ENCODE measurements at regions of chr9 and their contacts with region 1.

Region 1: DNA sequence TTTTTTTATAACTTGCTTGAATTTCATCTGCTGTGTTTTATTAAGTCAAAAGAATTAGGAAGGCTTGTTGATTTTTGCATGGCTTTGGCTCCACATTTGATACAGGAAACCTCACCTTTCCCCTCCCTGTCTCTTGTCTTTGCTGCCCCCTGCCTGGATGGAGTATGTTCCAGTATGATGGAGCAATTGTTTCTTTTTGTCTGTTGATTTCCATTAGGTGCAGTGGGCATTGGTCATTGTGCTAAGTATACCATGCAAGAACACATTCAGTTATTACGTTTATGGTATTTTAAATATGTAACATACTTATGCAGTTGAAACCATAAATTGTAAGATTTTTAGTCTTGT is 19.6 kb downstream of the TJP2 start:
- DNase-seq: peak; percentile 45
- H3K4me3 ChIP-seq: peak overlapping the region in 1 of 2 experiments; percentile 26; a peak in 1 of 4 replicates
- H3K27ac ChIP-seq: no peak overlapping the region
- H3K4me1 ChIP-seq: no peaks in the 10 kb centered on the region; a peak in 1 of 4 replicates
- H3K27me3 ChIP-seq: no peaks in the 10 kb centered on the region
- CTCF ChIP-seq: no peak
- EP300 ChIP-seq: no peak
- RAD21 ChIP-seq: peak; percentile 70

Region 2: GRCh38 chr9:68933434-68934328 is 260.0 kb before region 1 on chr9:
- CTCF ChIA-PET with region 1: no interaction called
- POLR2A ChIA-PET with region 1: no interaction called
- DNase-seq: no peak
- H3K4me3 ChIP-seq: no peak overlapping the region
- H3K27ac ChIP-seq: no peak overlapping the region
- H3K4me1 ChIP-seq: no peaks in the 10 kb centered on the region
- H3K27me3 ChIP-seq: peaks cover 5% of the 10 kb centered on the region; the same call in 1 of the 2 replicates
- CTCF ChIP-seq: no peak
- EP300 ChIP-seq: no peak
- RAD21 ChIP-seq: no peak

Region 3: GRCh38 chr9:69044240-69045219 is 149.1 kb before region 1 on chr9:
- CTCF ChIA-PET with region 1: interaction called, 241 read pairs
- POLR2A ChIA-PET with region 1: no interaction called
- DNase-seq: peak; percentile 50
- H3K4me3 ChIP-seq: no peak overlapping the region
- H3K27ac ChIP-seq: peak overlapping the region in 1 of 2 experiments; percentile 24; a peak in 2 of 4 replicates
- H3K4me1 ChIP-seq: peaks cover 7 to 9% of the 10 kb centered on the region in 2 experiments; a peak in 2 of 4 replicates
- H3K27me3 ChIP-seq: no peaks in the 10 kb centered on the region
- CTCF ChIP-seq: no peak
- EP300 ChIP-seq: no peak
- RAD21 ChIP-seq: no peak

Region 4: GRCh38 chr9:69066955-69067354 is 126.7 kb before region 1 on chr9:
- CTCF ChIA-PET with region 1: interaction called, 241 read pairs
- POLR2A ChIA-PET with region 1: no interaction called
- DNase-seq: no peak
- H3K4me3 ChIP-seq: no peak overlapping the region
- H3K27ac ChIP-seq: no peak overlapping the region
- H3K4me1 ChIP-seq: no peaks in the 10 kb centered on the region
- H3K27me3 ChIP-seq: no peaks in the 10 kb centered on the region
- CTCF ChIP-seq: no peak
- EP300 ChIP-seq: no peak
- RAD21 ChIP-seq: no peak

Region 5: DNA sequence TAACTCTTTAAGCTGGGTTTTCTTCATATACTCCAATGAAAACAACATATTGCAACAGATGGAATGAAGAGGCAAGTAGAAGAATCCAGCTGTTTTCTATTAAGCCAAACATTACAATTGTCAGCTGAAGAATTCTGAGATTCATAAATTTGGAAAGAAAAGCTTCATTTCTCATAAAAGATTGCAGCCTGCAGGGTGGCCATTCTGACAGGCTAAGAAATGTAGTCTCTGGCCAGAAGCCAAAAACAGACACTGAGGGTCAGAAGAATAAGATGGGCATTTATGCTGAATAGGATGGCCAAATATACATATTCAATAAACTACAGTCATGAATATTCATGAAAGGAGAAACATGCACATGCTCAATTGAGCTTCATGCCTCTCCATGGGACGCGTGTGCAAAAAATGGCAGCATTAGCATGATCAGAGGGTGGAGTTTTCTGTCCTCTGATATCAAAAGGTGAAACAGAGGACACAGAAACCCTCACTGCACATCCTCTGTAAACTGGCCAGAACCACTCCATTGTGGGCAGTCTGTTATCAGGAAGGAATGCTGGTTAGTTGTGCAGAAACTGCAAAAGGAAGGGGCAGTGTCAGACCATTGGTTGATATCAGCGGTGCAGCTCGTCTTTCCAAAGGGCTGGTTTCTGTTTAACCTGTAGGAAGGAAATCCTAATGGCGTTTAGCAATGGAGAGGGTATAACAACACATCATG is 107.9 kb before region 1 on chr9:
- CTCF ChIA-PET with region 1: interaction called, 15 read pairs
- POLR2A ChIA-PET with region 1: no interaction called
- DNase-seq: no peak
- H3K4me3 ChIP-seq: no peak overlapping the region
- H3K27ac ChIP-seq: no peak overlapping the region
- H3K4me1 ChIP-seq: peaks cover 0 to 3% of the 10 kb centered on the region in 2 experiments; a peak in 1 of 4 replicates
- H3K27me3 ChIP-seq: no peaks in the 10 kb centered on the region
- CTCF ChIP-seq: no peak
- EP300 ChIP-seq: no peak
- RAD21 ChIP-seq: no peak

Region 6: GRCh38 chr9:69093471-69094103 is 100.1 kb before region 1 on chr9:
- CTCF ChIA-PET with region 1: interaction called, 10 read pairs
- POLR2A ChIA-PET with region 1: no interaction called
- DNase-seq: no peak
- H3K4me3 ChIP-seq: no peak overlapping the region
- H3K27ac ChIP-seq: no peak overlapping the region
- H3K4me1 ChIP-seq: no peaks in the 10 kb centered on the region
- H3K27me3 ChIP-seq: no peaks in the 10 kb centered on the region
- CTCF ChIP-seq: no peak
- EP300 ChIP-seq: no peak
- RAD21 ChIP-seq: no peak

Region 7: DNA sequence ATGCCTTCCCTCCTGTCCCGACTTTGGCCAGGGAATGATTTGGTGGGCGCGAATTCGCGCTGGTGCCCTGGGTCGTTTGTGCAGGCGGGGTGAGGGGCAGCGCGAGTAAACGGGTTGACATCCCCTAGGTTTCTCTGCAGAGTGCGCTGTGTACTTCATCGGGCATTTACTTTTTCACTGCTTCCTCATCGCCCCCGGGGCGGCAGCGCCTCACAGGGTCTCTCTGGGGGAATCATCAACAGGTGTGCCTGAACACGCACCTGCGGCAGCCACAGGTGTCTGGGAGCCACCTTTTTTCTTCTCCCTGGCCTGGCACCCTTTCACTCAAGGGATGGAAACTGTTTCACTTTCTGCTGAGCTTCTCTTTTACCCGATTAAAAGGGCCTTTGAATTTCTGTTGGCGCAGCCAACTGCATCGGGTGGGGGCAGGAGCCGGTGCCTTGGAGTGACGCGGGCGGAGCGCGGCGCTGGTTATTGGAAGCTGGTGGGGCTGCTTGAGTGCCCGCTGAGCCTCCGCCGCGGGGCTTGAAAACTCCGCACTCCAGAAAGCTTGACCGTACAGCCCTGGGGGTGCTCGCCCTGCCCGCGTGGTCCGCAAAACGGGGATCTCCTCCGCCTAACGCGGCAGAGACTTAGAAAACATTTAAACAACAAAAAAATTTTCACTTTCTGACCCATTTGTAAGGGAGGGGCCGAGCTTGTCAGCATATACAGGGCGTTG is 71.7 kb before region 1 on chr9:
- CTCF ChIA-PET with region 1: interaction called, 11 read pairs
- POLR2A ChIA-PET with region 1: no interaction called
- DNase-seq: peak; percentile 79
- H3K4me3 ChIP-seq: peak overlapping the region; percentile 70 to 97
- H3K27ac ChIP-seq: peak overlapping the region in 1 of 2 experiments; percentile 57; a peak in 2 of 4 replicates
- H3K4me1 ChIP-seq: peaks cover 5 to 8% of the 10 kb centered on the region in 2 experiments; a peak in 2 of 4 replicates
- H3K27me3 ChIP-seq: no peaks in the 10 kb centered on the region
- CTCF ChIP-seq: no peak
- EP300 ChIP-seq: no peak
- RAD21 ChIP-seq: no peak; the same call in 1 of the 2 replicates

Region 8: DNA sequence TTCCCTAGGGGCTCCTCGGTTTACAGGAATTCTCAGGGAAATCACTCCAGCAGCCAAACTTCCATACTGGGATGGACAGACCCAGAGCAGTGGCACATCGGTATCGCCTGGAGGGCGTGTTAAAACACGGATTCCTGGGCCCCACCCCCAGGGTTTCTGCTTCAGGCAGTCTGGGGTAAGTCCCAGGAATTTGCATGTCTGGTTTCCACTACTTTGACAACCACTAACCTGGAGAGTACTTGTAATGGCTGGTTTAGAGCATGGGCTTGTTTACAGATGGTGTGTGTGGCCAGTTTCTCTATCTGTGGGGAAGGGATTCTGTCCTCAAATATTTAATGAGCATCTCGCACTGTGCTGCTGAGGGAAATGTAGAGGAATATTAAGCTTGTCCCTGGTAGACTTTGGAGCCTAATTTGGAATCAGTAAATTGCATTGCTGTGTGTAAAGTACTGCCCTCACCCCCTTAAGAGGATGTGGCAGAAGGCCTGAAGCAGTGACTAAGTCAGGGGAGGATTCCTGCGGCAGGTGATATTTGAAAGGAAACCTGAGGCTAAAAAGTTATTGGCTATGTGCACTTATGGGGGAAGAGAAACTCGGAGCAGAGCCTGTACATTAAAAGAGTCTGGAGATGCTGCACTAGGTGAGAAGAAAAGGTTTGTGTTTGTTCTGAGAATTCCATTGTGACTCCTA is 38.2 kb before region 1 on chr9:
- CTCF ChIA-PET with region 1: interaction called, 13 read pairs
- POLR2A ChIA-PET with region 1: no interaction called
- DNase-seq: no peak
- H3K4me3 ChIP-seq: no peak overlapping the region
- H3K27ac ChIP-seq: no peak overlapping the region
- H3K4me1 ChIP-seq: peaks cover 0 to 3% of the 10 kb centered on the region in 2 experiments; a peak in 1 of 4 replicates
- H3K27me3 ChIP-seq: no peaks in the 10 kb centered on the region
- CTCF ChIP-seq: no peak
- EP300 ChIP-seq: no peak
- RAD21 ChIP-seq: no peak

Measured in SK-N-SH (cell line).